Activated naive CD4-positive, alpha-beta T cell treated with anti-CD3 and anti-CD28 coated beads, Interleukin-2, amount 10 ng/mL, durations not matched to agents 7 days and 5 days (primary cell): ENCODE measurements at regions of chr3 and their contacts with region 1.

Region 1: DNA sequence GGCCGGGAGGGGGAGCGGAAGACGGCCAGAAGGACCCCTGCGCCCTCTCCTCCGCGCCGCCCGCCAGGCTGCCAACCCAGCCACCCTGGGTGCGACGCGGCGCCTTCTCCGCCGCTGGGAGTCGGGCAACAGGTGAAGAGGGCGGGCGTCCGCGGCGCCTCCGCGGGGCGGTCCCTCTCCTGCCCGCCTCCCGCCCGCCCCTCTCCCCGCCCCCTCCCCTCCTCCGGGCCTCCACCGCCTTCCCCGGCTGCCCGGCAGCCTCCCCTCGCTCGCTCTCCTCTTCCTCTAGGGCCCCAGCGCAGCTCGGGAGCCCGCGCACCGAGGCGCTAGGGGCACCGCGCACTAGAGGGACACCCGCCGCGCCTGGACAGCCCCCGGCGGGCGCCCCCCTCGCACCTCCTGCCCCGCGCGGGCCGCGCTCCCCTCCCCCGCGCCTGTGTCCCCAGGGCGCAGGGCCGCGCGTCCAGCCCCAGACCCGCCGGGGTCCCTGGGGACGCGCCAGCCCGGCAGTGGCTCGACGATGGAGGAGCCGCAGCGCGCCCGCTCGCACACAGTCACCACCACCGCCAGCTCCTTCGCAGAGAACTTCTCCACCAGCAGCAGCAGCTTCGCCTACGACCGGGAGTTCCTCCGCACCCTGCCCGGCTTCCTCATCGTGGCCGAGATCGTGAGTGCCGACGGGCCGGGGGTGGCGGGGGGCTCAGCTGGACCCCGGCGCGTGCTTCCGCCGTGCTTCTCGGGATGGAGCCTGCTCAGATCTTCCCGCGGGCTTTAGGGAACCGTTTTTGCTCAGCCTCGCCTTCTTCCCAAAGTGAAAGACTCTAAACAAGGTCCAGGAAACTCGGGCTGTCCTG is at the start of gene CMTM8:
- DNase-seq: peak; percentile 78
- H3K4me3 Mint-ChIP-seq: peak within 1 kb of the TSS; percentile 78
- H3K27ac Mint-ChIP-seq: peak within 1 kb of the TSS; percentile 59
- H3K4me1 Mint-ChIP-seq: peaks cover 31% of the 10 kb centered on the region
- H3K27me3 Mint-ChIP-seq: peaks cover 35% of the 10 kb centered on the region

Region 2: DNA sequence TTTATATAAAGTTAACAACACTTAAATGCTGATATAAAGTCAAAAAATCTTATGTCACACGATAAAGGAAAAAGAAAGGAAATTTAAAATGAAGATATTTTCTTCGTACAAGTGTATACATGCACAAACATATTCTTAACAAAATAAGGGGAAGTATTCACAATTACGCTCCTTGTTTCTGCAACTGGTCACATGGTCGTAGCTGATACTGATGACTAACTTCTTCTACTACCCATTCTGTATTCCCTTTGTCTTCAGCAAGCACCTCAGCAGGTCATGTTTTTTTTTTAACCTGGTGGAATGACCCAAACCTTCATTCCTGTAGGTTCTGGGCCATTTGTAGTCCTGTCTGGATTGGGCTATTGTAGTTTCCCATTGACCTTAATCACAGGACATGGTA is 30.2 kb before region 1 on chr3:
- CTCF ChIA-PET with region 1: no interaction called
- DNase-seq: no peak
- H3K4me3 Mint-ChIP-seq: no peak overlapping the region
- H3K27ac Mint-ChIP-seq: no peak overlapping the region
- H3K4me1 Mint-ChIP-seq: no peaks in the 10 kb centered on the region
- H3K27me3 Mint-ChIP-seq: peaks cover 4% of the 10 kb centered on the region

Region 3: DNA sequence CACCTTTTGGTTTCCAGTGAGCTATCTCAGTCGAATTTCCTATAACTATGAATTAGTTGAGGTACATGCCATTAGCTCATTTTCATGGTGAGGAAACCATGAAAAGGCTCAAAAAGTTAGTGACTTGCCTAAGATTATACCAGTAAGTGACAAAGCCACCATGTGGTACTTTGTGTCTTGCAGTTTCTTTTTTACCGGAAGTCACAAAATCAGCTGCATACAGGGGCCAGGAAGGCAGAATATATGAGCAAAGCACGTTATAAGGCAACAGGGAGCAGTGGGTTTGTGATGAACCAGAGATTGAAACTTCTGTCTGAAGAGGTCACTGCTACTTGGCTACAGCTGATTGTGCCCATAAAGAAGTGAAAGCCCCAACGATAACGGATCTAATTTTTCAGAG is 50.1 kb after region 1 on chr3:
- CTCF ChIA-PET with region 1: interaction called, 24 read pairs
- DNase-seq: peak; percentile 34
- H3K4me3 Mint-ChIP-seq: no peak overlapping the region
- H3K27ac Mint-ChIP-seq: peak overlapping the region; percentile 84
- H3K4me1 Mint-ChIP-seq: peaks cover 41% of the 10 kb centered on the region
- H3K27me3 Mint-ChIP-seq: no peaks in the 10 kb centered on the region

Region 4: GRCh38 chr3:33167716-33168336 is 929.1 kb after region 1 on chr3:
- CTCF ChIA-PET with region 1: no interaction called
- DNase-seq: no peak
- H3K4me3 Mint-ChIP-seq: no peak overlapping the region
- H3K27ac Mint-ChIP-seq: no peak overlapping the region
- H3K4me1 Mint-ChIP-seq: peaks cover 9% of the 10 kb centered on the region
- H3K27me3 Mint-ChIP-seq: peaks cover 6% of the 10 kb centered on the region